Esophagus muscularis mucosa (tissue), 4 donors: ENCODE measurements at regions of chr1 and their contacts with region 1.

Region 1: GRCh38 chr1:181088079-181089016 is at the start of gene IER5:
- DNase-seq: peak; percentile 99
- H3K4me3 ChIP-seq: peak within 1 kb of the TSS; percentile 81 to 98 (median 90)
- H3K27ac ChIP-seq: peak within 1 kb of the TSS; percentile 93 to 98 (median 98)
- H3K4me1 ChIP-seq: peaks cover 35 to 39% (median 37%) of the 10 kb centered on the region in 4 donors
- H3K27me3 ChIP-seq: no peaks in the 10 kb centered on the region
- CTCF ChIP-seq: no peak
- EP300 ChIP-seq: no peak
- POLR2A ChIP-seq: peak; percentile 99
- total RNA-seq, gene IER5: 14.5 to 22.0 (median 16.7) TPM

Region 2: DNA sequence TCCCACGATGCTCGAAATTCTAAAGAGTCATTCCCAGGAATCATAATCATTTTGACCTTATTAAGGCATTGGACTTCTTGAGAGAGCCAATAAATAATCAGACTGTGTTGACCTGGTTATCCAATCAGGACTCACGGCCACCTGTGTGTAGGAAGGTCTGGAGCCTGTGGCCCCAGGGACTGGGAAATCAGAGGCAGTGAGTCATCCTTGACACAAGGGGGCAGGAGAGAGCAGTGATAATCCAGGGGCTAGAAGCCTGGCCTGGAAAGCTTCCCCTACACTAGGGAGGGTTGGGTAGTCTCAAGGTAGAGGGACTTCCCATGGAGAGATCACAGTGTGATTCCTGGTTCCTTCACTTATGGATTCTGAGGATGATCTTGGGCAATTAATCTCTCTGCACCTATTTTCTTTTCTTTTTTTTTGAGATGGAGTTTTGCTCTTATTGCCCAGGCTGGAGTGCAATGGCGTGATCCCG is 49.9 kb before region 1 on chr1:
- intact Hi-C with region 1: loop called (anchors 5 kb)
- DNase-seq: no peak
- H3K4me3 ChIP-seq: no peak overlapping the region
- H3K27ac ChIP-seq: no peak overlapping the region
- H3K4me1 ChIP-seq: peaks cover 15 to 63% (median 48%) of the 10 kb centered on the region in 4 donors
- H3K27me3 ChIP-seq: no peaks in the 10 kb centered on the region
- CTCF ChIP-seq: peak; percentile 62 to 79 (median 75)
- EP300 ChIP-seq: no peak
- POLR2A ChIP-seq: no peak

Region 3: GRCh38 chr1:181105134-181106021 is 17.0 kb after region 1 on chr1:
- intact Hi-C with region 1: loop called (anchors 1 kb)
- DNase-seq: peak; percentile 97
- H3K4me3 ChIP-seq: peak overlapping the region; percentile 66 to 91 (median 86)
- H3K27ac ChIP-seq: peak overlapping the region; percentile 89 to 94 (median 91)
- H3K4me1 ChIP-seq: peaks cover 31 to 65% (median 53%) of the 10 kb centered on the region in 4 donors
- H3K27me3 ChIP-seq: no peaks in the 10 kb centered on the region
- CTCF ChIP-seq: no peak
- EP300 ChIP-seq: no peak
- POLR2A ChIP-seq: peak; percentile 62

Region 4: DNA sequence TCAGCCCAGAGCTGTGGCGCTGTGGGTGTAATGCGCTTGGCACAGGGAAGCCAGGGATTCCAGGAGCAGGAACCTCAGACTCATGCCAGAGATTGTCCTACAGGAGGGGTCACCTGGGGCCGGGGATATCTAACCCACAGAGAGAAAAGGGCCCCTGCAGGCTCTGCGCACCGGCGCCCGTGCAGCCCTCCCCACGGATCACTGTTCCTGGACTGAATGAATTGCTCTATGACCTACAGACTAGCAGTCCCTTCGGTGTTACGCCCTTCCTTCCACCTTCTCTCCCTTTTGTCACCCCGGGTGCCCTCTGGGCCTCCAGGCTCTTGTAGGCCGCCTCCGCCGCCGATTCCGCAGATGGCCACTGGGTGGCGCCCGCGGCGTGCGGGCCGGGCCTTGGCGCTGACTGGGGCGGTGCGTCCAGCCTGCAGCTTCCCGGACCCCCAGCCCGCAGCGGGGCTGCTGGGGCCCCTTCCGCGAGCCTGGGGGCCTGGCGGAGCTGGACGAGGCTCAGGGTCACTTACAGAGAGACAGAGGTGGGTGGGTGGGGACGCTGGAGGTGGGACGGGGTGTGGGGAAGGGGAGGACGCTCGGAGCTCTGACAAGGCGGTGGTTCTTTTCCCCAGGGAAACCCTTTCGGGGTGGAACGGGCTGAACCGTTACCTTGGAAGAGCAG is 101.5 kb after region 1 on chr1:
- intact Hi-C with region 1: no loop called
- DNase-seq: no peak
- H3K4me3 ChIP-seq: peak overlapping the region; percentile 36 to 54 (median 38)
- H3K27ac ChIP-seq: no peak overlapping the region
- H3K4me1 ChIP-seq: peaks cover 8 to 11% (median 9%) of the 10 kb centered on the region in 4 donors
- H3K27me3 ChIP-seq: peaks cover 0 to 28% (median 0%) of the 10 kb centered on the region in 4 donors
- CTCF ChIP-seq: peak in 2 of 3 experiments; percentile 94 to 98
- EP300 ChIP-seq: no peak
- POLR2A ChIP-seq: no peak